PC-3 (cell line): ENCODE measurements at regions of chr1 and their contacts with region 1.

Region 1: DNA sequence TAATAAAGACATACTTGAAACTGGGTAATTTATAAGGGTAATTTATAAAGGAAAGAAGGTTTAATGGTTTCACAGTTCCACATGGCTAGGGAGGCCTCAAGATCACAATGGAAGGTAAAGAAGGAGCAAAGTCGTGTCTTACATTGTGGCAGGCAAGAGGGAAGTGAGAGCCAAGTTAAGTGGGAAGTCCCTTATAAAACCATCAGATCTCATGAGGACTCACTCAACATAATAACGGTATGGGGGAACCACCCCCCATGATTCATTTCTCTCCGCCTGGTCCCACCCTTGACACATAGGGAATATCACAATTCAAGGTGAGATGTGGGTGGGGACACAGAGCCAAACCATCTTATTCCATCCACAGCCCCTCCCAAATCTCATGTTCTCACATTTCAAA is 76.8 kb upstream of the ZNF678 start:
- DNase-seq: no peak
- ATAC-seq: no peak
- H3K4me3 ChIP-seq: no peak overlapping the region
- H3K27ac ChIP-seq: no peak overlapping the region
- H3K4me1 ChIP-seq: no peaks in the 10 kb centered on the region
- H3K27me3 ChIP-seq: 0 out of 2 replicates have a peak, but pooled peaks cover 6% of the 10 kb centered on the region
- CTCF ChIP-seq: no peak

Region 2: GRCh38 chr1:226903819-226904716 is 582.5 kb before region 1 on chr1:
- CTCF ChIA-PET with region 1: no interaction called
- POLR2A ChIA-PET with region 1: no interaction called
- intact Hi-C with region 1: no loop called
- DNase-seq: no peak
- ATAC-seq: peak; percentile 27; the same call in 1 of the 2 replicates
- H3K4me3 ChIP-seq: no peak overlapping the region
- H3K27ac ChIP-seq: no peak overlapping the region
- H3K4me1 ChIP-seq: no peaks in the 10 kb centered on the region
- H3K27me3 ChIP-seq: no peaks in the 10 kb centered on the region
- CTCF ChIP-seq: no peak

Region 3: GRCh38 chr1:227728059-227728891 is 241.7 kb after region 1 on chr1:
- CTCF ChIA-PET with region 1: no interaction called
- POLR2A ChIA-PET with region 1: no interaction called
- intact Hi-C with region 1: loop called (anchors 1 kb)
- DNase-seq: peak; percentile 98
- ATAC-seq: peak; percentile 89
- H3K4me3 ChIP-seq: peak overlapping the region; percentile 82
- H3K27ac ChIP-seq: peak overlapping the region; percentile 29
- H3K4me1 ChIP-seq: peaks cover 19% of the 10 kb centered on the region
- H3K27me3 ChIP-seq: no peaks in the 10 kb centered on the region
- CTCF ChIP-seq: 0 out of 2 replicates have a peak, but pooled peaks have one; percentile 14